Right cardiac atrium (tissue), 5 donors: ENCODE measurements at regions of chr17 and their contacts with region 1.

Region 1: DNA sequence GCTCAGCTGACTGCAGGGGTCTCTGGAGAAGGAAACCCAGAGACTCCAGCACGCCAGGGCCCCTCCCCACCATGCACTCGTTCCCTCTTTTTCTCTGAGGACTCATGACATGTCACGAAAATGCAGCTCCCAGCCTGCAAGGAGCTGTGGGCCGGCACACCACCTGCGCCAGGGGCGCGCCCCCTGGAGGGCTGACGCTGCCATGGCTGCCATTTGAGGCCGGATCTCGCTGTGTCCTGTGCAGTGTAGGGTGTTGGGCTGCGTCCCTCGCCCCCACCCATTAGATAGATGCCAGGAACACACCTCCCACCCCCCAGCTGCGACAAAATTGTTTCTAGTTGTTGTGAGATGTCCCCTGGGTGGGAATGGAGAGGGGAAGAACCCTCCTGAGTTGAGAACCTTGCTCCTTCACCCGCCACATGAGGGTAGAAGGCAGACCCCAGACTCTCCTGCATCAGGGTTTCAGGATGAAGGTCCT is 8.2 kb downstream of the SYNGR2 start:
- DNase-seq: peak; percentile 70 to 92 (median 90)
- ATAC-seq: peak; percentile 50 to 55
- H3K4me3 ChIP-seq: no peak overlapping the region
- H3K27ac ChIP-seq: no peak overlapping the region
- H3K4me1 ChIP-seq: peaks cover 3% of the 10 kb centered on the region
- H3K27me3 ChIP-seq: no peaks in the 10 kb centered on the region

Region 2: GRCh38 chr17:78107457-78107856 is 69.1 kb before region 1 on chr17:
- intact Hi-C with region 1: loop called (anchors 5 to 10 kb)
- DNase-seq: peak in 1 of 3 donors; percentile 20
- ATAC-seq: no peak
- H3K4me3 ChIP-seq: no peak overlapping the region
- H3K27ac ChIP-seq: no peak overlapping the region
- H3K4me1 ChIP-seq: no peaks in the 10 kb centered on the region
- H3K27me3 ChIP-seq: no peaks in the 10 kb centered on the region

Region 3: GRCh38 chr17:78112518-78113226 is 63.9 kb before region 1 on chr17:
- intact Hi-C with region 1: loop called (anchors 5 to 10 kb)
- DNase-seq: peak; percentile 80 to 92 (median 92)
- ATAC-seq: peak; percentile 61 to 80
- H3K4me3 ChIP-seq: no peak overlapping the region
- H3K27ac ChIP-seq: no peak overlapping the region
- H3K4me1 ChIP-seq: no peaks in the 10 kb centered on the region
- H3K27me3 ChIP-seq: no peaks in the 10 kb centered on the region

Region 4: DNA sequence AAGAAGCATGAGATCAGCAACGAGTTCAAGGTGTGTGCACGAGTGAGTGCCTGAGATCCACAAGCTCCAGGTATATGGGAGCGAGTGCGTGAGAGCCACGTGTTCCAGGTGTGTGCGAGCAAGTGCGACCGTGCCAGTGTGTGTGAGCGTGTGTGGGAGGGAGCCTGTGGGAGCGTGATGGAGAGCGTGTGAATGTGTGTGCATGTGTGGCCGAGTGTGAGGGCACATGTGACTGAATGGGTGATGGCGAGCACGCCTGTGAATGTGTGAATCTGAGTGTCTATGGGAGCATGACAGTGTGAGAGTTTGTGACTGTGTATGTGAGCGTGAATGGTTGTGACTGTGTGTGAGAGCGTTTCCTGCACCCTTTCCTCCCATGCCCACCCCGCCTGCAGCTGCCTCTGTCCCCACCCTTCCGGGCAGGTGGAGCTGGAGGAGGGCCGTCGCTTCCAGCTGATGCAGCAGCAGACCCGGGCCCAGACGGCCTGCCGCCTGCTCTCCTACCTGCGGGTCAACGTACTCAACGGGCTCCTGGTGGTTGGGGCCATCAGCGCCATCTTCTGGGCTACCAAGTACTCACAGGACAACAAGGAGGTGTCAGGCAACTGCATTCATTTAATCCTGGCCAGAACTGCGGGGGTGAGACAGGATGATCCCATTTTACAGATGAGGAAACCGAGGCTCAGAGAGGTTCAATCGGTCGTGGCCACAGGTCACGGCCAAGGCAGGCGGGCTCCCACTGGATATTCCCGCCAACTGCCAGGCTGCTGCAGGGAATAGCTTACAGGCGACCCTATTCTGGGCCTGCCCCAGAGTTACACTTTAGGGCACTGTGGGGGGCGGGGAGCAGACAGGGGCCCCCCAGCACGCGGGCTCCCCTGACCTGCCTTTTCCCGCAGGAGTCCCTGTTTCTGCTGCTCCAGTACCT is 42.4 kb before region 1 on chr17:
- intact Hi-C with region 1: loop called in 1 of 4 experiments (anchors 5 kb)
- DNase-seq: peak in 2 of 3 donors; percentile 74 to 77
- ATAC-seq: no peak
- H3K4me3 ChIP-seq: no peak overlapping the region
- H3K27ac ChIP-seq: no peak overlapping the region
- H3K4me1 ChIP-seq: no peaks in the 10 kb centered on the region
- H3K27me3 ChIP-seq: no peaks in the 10 kb centered on the region